ENCODE measurements at regions of chr20 and their contacts with region 1.

Region 1: DNA sequence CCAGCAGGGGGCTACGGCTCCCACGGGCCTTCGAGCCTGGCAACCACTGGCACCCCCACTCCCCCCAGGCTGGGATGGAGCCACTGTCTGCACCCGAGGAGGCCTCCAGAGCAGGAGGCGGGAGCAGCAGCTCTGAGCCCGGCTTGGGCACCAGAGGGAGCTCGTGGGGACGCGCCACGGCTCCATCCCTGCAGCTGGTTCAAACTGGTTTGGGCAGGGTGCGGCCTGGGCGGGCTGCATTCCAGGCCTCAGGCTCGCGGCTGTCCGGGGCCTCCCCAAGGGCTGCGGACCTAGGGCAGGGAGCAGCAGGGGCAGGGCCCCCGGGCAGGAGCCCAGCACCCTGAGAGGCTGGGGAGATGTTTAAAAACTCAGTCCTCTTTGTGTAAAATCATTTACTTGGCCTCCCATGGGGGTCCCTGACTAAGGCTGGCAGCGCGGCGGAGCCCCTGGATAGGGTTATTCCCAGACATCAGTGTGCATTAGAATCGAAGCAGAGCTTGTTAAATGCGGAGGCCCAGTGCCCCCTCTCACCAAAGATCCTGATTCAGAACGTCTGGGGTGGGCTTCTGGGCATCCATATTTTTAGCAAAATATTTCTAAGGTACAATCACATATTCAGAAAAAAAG is 4.1 kb upstream of the BCAS4 start:
- DNase-seq: peak; percentile 87 to 96
- ATAC-seq: peak; percentile 78 to 86
- H3K4me3 ChIP-seq: no peak overlapping the region
- H3K27ac ChIP-seq: peak overlapping the region; percentile 90
- H3K4me1 ChIP-seq: peaks cover 32% of the 10 kb centered on the region
- CTCF ChIP-seq: peak; percentile 68
- EP300 ChIP-seq: no peak
- POLR2A ChIP-seq: peak; percentile 42
- RAD21 ChIP-seq: peak; percentile 31 to 57; a peak in 4 of 5 replicates

Region 2: DNA sequence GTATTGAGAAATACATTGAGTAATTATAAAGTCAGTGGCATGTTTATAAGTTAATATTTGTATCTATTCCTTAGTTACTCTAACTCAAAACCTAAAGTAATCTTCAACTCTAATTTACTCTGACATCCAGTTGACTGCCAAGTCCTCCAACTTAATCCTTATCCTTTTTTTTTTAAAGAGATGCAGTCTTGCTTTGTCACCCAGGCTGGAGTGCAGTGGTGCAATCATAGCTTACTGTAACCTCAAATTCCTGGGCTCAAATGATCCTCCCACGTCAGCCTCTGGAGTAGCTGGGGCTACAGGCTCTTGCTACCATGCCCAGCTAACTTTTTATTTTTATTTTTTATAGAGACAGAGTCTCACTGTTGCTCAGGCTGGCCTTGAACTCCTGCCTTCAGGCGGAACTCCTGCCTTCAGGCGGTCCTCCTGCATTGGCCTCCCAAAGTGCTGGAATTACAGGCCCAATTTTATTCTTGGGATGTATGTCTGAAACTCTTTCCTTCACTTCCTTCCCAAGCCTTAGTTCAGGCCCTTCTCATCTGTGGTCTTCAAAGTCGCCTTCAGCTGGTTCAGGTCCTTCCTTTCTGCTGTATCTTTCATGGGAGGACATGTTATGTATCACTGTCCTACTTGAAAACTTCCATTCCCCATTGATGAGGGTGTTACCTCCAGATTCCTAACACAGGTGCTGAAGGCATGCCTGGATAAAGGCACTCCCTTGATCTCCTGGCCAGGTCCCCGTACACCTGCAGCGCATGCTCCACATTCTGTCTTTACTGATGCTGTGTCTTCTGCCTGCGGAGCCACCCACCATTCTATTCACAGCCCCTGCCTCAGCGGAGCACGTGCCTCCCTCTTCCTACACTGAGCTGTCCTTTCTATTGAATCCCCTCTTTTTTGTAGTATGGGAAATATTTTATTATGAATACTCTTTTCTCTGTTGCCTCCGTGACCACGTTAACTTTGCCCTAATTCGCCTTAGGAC is 255.9 kb before region 1 on chr20:
- CTCF ChIA-PET with region 1: no interaction called
- POLR2A ChIA-PET with region 1: no interaction called
- DNase-seq: no peak
- ATAC-seq: no peak
- H3K4me3 ChIP-seq: no peak overlapping the region
- H3K27ac ChIP-seq: peak overlapping the region in 1 of 2 experiments; percentile 8; a peak in 1 of 6 replicates
- H3K4me1 ChIP-seq: peaks cover 19% of the 10 kb centered on the region; the same call in 2 of the 3 replicates
- CTCF ChIP-seq: no peak
- EP300 ChIP-seq: no peak
- POLR2A ChIP-seq: no peak
- RAD21 ChIP-seq: no peak

Region 3: DNA sequence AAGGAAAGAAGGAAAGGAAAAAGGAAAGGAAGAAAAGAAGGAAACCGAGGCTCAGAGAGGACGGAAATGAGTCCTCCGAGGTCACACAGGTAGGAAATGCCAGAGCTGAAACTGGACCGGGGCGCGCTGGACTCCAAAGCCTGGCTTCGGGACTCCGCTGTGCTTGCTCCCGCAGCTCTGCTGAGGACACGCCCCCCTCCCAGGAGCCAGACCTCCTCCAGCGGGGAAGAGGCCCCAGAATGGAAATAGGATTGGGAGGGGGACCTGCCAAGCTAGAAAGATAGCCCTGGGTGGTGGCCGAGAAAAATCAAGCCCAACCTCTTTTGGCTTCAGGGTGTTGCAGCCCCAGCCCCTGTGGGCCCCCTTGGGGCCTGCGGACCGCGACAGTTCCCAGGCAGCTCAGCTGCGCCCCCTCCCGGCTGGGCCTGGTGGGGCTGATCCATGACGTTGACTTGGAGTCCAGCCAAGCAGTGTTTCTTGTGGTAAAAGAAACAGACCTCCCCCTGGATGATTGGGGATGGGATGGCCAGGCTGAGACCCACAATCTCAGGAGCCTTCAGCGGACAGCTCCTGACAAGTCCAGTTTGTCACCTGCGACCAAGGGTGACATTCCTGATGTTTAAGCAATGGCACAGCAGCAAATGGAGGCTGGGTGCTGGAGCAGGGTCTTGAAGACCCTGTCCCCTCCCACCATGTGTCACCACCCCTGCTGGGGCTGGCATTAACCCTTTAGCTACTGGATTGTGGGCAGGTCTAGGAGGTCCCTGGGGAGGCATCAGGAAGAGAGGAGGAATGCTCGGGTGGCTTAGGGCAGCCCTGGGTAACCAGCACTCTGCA is 154.9 kb before region 1 on chr20:
- CTCF ChIA-PET with region 1: interaction called, 347 read pairs
- POLR2A ChIA-PET with region 1: no interaction called
- DNase-seq: peak; percentile 84 to 85
- ATAC-seq: peak; percentile 64 to 76
- H3K4me3 ChIP-seq: peak overlapping the region; percentile 37
- H3K27ac ChIP-seq: peak overlapping the region; percentile 67 to 95
- H3K4me1 ChIP-seq: peaks cover 36% of the 10 kb centered on the region
- CTCF ChIP-seq: peak; percentile 97
- EP300 ChIP-seq: no peak
- POLR2A ChIP-seq: no peak
- RAD21 ChIP-seq: peak; percentile 56 to 74

Region 4: DNA sequence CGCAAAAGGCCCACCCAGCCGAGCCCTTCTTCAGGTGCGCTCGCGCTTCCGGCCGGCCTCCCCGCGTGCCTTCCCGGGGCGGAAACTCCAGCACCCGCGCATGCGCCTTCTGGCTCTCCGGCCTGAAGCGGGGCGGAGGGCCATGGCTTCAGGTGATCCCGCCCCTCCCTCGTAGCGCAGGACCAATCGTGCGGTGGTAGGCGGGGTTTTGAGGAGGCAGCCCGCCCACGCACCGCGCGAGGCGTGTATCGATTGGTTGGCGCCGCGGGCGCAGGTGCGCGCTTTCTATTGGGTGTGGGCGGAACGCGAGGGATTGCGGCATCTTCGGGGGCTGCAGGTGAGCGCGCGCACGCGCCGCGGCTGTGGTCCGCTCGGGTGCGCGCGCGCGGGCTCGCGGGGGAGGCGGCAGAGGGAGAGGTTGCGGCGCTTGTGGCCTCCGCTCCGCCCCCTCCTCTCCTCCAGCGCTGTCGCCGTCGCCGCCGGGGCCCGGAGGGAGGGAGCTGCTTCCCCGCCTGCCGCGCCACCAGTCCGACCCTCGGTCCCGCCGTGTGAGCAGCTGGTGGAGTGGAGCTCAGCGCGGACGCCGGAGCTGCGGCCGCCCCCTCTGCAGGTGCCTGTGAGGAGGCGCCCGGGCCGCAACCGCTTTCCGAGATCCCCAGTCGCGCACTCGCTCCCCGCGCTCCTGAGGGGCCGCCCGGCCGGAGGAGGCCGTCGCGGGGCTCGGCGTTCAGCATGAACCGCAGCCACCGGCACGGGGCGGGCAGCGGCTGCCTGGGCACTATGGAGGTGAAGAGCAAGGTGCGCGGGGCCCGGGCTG is 59.5 kb before region 1 on chr20 and contains the start of gene PARD6B:
- CTCF ChIA-PET with region 1: interaction called, 16 read pairs
- POLR2A ChIA-PET with region 1: interaction called, 3 read pairs
- DNase-seq: peak; percentile 96 to 100
- ATAC-seq: peak; percentile 76 to 86
- H3K4me3 ChIP-seq: peak within 1 kb of the TSS; percentile 90
- H3K27ac ChIP-seq: peak within 1 kb of the TSS; percentile 96
- H3K4me1 ChIP-seq: peaks cover 68% of the 10 kb centered on the region
- CTCF ChIP-seq: no peak
- EP300 ChIP-seq: no peak
- POLR2A ChIP-seq: peak; percentile 74
- RAD21 ChIP-seq: 0 out of 5 replicates have a peak, but pooled peaks of 1 of the 2 experiments have one; percentile 11
- polyA plus RNA-seq, gene PARD6B: 6.2 and 6.4 TPM in 2 replicates

Region 5: GRCh38 chr20:50776122-50776817 is 14.5 kb before region 1 on chr20:
- CTCF ChIA-PET with region 1: interaction called, 29 read pairs
- POLR2A ChIA-PET with region 1: no interaction called
- DNase-seq: no peak
- ATAC-seq: peak in 1 of 2 experiments; percentile 28; a peak in 1 of 6 replicates
- H3K4me3 ChIP-seq: no peak overlapping the region
- H3K27ac ChIP-seq: peak overlapping the region in 1 of 2 experiments; percentile 47; a peak in 1 of 6 replicates
- H3K4me1 ChIP-seq: peaks cover 25% of the 10 kb centered on the region
- CTCF ChIP-seq: no peak
- EP300 ChIP-seq: no peak
- POLR2A ChIP-seq: no peak
- RAD21 ChIP-seq: no peak

Region 6: GRCh38 chr20:50831622-50832021 is 40.9 kb after region 1 on chr20:
- CTCF ChIA-PET with region 1: interaction called, 16 read pairs
- POLR2A ChIA-PET with region 1: no interaction called
- DNase-seq: no peak
- ATAC-seq: no peak
- H3K4me3 ChIP-seq: no peak overlapping the region
- H3K27ac ChIP-seq: no peak overlapping the region
- H3K4me1 ChIP-seq: 0 out of 3 replicates have a peak, but pooled peaks cover 2% of the 10 kb centered on the region
- CTCF ChIP-seq: no peak
- EP300 ChIP-seq: no peak
- POLR2A ChIP-seq: no peak
- RAD21 ChIP-seq: no peak

Region 7: DNA sequence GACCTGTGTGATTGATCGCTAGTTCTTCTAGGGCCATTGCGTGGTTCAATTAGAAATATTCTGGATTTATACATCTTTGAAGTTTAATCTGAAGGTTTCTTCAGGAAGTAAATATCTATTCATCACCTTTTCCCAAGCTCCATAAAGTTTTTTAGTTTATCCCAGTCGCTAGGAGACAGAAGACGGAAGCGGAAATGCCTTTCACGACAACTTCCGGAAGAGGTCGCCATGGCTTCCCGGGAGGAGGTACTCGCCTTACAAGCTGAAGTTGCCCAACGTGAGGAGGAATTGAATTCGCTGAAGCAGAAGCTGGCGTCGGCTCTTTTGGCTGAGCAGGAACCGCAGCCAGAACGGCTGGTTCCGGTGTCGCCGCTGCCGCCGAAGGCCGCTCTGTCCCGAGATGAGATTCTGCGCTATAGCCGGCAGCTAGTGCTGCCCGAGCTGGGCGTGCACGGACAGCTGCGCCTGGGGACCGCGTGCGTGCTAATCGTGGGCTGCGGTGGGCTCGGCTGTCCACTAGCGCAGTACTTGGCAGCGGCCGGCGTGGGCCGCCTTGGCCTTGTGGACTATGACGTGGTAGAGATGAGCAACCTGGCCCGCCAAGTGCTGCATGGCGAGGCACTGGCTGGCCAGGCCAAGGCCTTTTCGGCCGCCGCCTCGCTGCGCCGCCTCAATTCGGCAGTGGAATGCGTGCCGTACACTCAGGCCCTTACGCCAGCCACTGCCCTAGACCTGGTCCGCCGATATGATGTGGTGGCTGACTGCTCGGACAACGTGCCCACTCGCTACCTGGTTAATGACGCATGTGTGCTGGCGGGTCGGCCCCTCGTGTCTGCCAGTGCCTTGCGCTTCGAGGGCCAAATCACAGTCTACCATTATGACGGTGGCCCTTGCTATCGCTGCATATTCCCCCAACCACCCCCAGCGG is 168.1 kb after region 1 on chr20 and contains the start of gene MOCS3:
- CTCF ChIA-PET with region 1: interaction called, 10 read pairs
- POLR2A ChIA-PET with region 1: interaction called, 7 read pairs
- DNase-seq: peak; percentile 81 to 95
- ATAC-seq: peak; percentile 84 to 86
- H3K4me3 ChIP-seq: peak within 1 kb of the TSS; percentile 85
- H3K27ac ChIP-seq: peak within 1 kb of the TSS; percentile 89 to 98
- H3K4me1 ChIP-seq: peaks cover 17% of the 10 kb centered on the region
- CTCF ChIP-seq: no peak
- EP300 ChIP-seq: no peak
- POLR2A ChIP-seq: no peak
- RAD21 ChIP-seq: no peak
- polyA plus RNA-seq, gene MOCS3: 4.4 and 4.8 TPM in 2 replicates

Measured in A549 (cell line).